MCF 10A (cell line): ENCODE measurements at regions of chr2 and their contacts with region 1.

Region 1: DNA sequence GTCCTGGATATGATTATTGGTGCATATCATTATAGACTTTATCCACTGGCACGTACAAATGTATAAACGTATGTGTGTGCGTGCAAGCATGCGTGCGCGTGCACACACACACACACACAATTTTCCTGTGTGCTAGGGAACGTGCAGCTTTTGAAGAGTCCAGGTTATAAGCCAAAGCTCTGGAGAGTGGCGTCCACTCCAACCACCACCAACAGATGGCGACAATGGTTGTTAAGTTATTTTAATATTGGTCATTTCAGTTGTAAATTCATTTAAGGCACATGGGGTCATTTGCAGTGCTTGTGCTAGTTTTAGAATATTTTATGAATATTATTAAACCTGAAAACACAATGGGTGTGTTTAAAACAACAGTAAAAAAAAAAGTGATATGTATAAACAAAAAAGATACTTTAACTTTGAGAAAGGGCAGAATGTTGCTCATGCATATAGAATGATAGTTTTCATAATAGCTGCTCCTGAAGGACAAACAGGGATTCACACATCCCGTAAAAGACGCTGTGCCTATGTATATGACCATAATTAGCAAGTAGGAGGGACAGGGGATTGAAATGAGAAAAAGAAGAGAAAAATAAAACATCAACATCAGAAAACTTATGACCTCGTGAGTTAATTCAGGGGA is 124.2 kb upstream of the ITGB6 start:
- DNase-seq: peak; percentile 66
- H3K4me3 Mint-ChIP-seq: no peak overlapping the region
- H3K27ac Mint-ChIP-seq: peak overlapping the region; percentile 36
- H3K4me1 Mint-ChIP-seq: peaks cover 30% of the 10 kb centered on the region
- H3K27me3 Mint-ChIP-seq: no peaks in the 10 kb centered on the region
- CTCF ChIP-seq: peak; percentile 71

Region 2: DNA sequence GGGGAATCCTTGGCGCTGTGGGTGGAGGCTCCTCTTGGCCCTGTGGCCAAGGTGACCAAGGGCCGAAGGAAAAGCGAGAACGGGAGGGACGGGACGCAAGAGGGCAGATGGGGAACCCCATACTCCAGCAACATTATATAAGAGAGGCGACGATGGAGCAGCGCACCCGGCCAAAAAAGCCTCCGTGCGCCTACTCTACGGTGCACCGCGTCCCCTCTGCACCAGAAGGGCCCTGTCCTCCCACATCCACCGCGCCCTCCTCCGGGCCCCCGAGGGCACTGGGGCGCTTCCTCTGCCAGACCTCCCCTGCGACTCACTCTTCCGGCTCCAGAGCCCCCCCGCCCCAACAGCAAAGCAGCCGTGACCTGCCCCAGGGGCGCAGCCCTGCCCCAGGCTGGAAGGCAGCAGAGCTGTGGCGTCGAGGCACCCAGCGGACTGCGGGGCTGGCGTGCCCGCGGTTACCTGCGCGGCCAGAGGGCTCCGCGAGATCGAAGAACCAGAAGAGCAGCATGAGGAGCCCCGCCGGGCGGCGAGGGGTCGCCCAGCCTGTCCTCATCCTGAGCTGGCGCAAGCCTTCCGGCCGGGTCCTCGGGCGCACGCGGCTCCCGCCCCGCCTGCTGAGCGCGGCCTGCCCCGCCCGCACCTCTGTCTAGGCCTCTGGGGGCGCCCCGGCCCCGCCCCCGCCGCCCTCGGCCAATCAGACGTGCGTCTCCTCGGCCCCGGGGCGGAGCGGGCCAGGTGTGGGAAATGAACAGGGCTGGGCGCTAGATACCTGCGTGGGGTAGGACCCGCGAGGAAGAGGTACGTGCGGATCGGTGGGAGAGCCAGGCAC is 419.9 kb before region 1 on chr2:
- CTCF ChIA-PET with region 1: no interaction called
- POLR2A ChIA-PET with region 1: no interaction called
- intact Hi-C with region 1: no loop called
- DNase-seq: no peak
- H3K4me3 Mint-ChIP-seq: no peak within 1 kb of the TSS
- H3K27ac Mint-ChIP-seq: no peak within 1 kb of the TSS
- H3K4me1 Mint-ChIP-seq: peaks cover 4% of the 10 kb centered on the region
- H3K27me3 Mint-ChIP-seq: no peaks in the 10 kb centered on the region
- CTCF ChIP-seq: no peak

Region 3: DNA sequence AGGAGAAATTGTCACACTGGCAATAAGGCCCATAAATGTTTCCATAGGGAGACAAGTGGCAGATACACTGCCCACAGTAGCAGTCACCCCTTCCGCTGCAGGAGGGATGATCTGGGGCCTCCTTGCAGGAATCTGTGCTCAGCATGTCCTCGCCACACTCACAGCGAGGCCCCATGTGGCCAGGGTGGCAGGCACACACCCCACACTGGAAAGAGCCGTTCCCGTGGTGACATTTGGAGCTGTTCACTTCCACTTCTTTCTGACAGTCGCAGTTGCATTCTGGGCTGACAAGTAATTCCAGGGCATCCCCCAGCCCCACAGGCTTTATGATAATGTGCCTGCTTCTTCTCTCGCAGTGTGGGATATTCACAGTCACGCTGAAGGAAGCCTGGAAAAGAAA is 186.8 kb before region 1 on chr2:
- CTCF ChIA-PET with region 1: no interaction called
- POLR2A ChIA-PET with region 1: no interaction called
- intact Hi-C with region 1: no loop called
- DNase-seq: no peak
- H3K4me3 Mint-ChIP-seq: no peak overlapping the region
- H3K27ac Mint-ChIP-seq: no peak overlapping the region
- H3K4me1 Mint-ChIP-seq: peaks cover 15% of the 10 kb centered on the region
- H3K27me3 Mint-ChIP-seq: no peaks in the 10 kb centered on the region
- CTCF ChIP-seq: no peak

Region 4: GRCh38 chr2:160306985-160307384 is 17.3 kb before region 1 on chr2:
- CTCF ChIA-PET with region 1: interaction called, 17 read pairs
- POLR2A ChIA-PET with region 1: no interaction called
- intact Hi-C with region 1: no loop called
- DNase-seq: no peak
- H3K4me3 Mint-ChIP-seq: no peak overlapping the region
- H3K27ac Mint-ChIP-seq: no peak overlapping the region
- H3K4me1 Mint-ChIP-seq: peaks cover 24% of the 10 kb centered on the region
- H3K27me3 Mint-ChIP-seq: no peaks in the 10 kb centered on the region
- CTCF ChIP-seq: no peak

Region 5: DNA sequence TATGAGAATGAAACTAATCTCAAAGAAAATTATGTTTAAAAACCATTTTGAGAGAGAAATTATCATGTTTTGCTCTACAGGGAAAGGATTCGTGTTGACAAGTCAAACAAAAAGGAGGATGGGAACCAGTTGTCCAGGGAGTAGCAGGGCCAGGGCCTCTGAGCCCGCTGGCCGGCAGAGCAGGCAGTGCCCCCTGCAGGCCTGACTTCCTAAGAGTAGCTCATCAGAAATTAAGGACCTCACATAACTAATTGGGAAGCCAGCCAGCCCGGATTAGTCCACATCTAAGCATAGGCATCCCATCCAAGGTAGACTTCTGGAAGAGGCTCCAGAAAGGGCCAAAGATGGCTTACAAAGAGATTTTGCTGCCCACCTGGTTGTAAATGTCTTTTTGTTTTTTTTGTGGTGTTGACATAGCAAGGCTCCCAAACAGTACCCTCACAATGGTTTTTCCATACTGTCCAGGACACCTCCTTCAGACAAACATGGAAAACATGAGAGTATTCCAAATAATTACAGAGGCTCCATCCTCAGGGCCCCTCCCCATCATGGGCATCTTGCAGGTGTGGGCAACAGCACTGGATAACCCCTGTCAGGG is 594.7 kb after region 1 on chr2:
- CTCF ChIA-PET with region 1: interaction called, 7 read pairs
- POLR2A ChIA-PET with region 1: no interaction called
- intact Hi-C with region 1: loop called (anchors 1 kb)
- DNase-seq: peak; percentile 79
- H3K4me3 Mint-ChIP-seq: no peak overlapping the region
- H3K27ac Mint-ChIP-seq: no peak overlapping the region
- H3K4me1 Mint-ChIP-seq: no peaks in the 10 kb centered on the region
- H3K27me3 Mint-ChIP-seq: no peaks in the 10 kb centered on the region
- CTCF ChIP-seq: peak; percentile 71

Region 6: DNA sequence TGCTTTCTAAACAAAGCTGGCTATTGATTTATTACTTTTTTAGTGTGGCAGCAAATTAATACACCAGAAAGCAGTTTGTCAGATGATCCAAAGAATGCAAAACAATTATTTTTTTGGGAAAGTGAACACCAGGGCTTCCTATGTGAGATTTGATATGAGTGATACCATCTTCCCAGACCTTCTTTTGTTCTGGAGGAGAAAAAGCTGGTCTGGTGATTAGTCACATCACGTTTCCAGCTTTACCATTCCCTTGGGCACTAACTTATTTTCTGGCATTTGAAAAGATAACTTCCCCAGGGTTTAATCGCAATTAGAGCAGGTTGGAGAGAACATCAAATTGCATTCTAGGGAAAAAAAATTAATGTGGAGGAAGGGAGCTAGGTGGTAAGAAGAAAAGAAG is 653.1 kb after region 1 on chr2:
- CTCF ChIA-PET with region 1: interaction called, 82 read pairs
- POLR2A ChIA-PET with region 1: no interaction called
- intact Hi-C with region 1: no loop called
- DNase-seq: no peak
- H3K4me3 Mint-ChIP-seq: no peak overlapping the region
- H3K27ac Mint-ChIP-seq: no peak overlapping the region
- H3K4me1 Mint-ChIP-seq: peaks cover 8% of the 10 kb centered on the region
- H3K27me3 Mint-ChIP-seq: no peaks in the 10 kb centered on the region
- CTCF ChIP-seq: no peak

Region 7: DNA sequence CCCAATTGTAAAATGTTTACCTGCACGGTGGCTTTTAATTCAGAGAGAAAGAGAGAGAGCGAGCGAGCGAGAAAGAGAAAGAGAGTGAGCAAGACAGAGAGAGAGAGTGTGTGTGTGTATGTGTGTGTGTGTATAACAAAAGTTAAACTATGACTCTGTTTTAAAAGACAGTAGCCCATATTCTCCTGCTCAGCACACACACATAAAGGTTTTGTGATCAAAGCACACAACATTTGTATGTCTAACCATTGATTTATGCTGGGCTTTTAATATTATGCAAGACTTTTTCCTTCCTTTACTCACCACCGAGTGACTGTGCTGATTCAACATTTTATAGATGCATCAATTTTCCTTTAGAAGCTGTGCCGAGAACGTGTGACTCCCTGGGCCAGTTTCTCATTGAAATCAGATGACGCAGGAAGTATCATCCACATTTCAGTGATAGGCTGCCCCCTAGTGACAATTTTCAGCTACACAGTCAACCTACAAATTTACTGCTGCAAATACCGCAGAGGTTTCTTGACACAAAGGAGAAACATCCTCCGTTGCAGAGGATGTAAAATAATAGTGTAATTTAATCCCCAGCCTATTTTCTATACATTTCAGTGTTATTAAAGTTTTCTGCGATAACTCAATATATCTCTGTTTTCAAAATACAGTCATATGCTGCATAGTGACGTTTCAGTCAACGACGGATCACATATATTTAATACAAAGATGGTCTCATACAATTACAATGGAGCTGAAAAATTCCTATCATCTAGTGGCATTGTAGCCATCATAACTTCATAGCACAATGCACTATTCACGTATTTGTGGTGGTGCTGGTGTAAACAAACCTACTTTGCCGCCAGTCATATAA is 670.1 kb after region 1 on chr2:
- CTCF ChIA-PET with region 1: interaction called, 59 read pairs
- POLR2A ChIA-PET with region 1: interaction called, 7 read pairs
- intact Hi-C with region 1: loop called (anchors 1 kb)
- DNase-seq: peak; percentile 87
- H3K4me3 Mint-ChIP-seq: no peak overlapping the region
- H3K27ac Mint-ChIP-seq: no peak overlapping the region
- H3K4me1 Mint-ChIP-seq: peaks cover 9% of the 10 kb centered on the region
- H3K27me3 Mint-ChIP-seq: no peaks in the 10 kb centered on the region
- CTCF ChIP-seq: peak; percentile 76